ENCODE measurements at regions of chr6 and their contacts with region 1.

Region 1: DNA sequence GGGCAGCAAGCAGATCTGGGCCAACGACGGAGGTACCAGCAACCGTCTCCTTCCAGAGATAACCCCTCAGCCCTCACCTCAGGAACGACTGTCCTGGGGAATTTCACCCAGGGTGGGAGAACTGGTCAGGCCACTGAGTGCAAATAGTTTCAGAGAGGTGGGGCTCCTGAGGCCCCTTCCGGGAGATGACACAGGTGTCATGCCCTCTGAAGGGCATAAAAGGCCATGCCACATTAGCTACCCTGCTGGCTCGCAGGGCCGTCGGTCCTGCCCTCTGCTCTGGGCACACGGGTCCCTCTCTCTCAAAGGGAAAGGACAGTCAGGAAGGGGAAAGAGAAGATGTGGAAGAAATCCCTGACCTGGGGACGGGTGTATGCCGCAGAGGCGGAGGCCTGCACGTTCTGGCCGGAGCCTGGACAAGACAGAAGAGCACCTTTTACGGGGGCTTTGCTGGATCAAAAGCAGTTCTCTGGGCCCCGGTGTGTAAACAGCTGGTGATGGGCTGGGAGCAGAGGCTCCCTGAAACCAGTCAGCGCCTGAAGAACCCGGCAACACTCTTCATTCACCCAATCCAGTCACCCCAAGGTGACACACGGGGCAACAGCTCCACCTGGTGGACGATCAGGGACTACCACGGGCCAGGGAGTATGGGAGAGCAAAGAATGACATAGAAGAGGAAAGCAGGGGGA is 6.4 kb upstream of the TAF8 start:
- DNase-seq: peak; percentile 87
- ATAC-seq: peak; percentile 44
- H3K4me3 Mint-ChIP-seq: peak overlapping the region; percentile 56
- H3K27ac Mint-ChIP-seq: peak overlapping the region; percentile 99
- H3K4me1 Mint-ChIP-seq: peaks cover 86% of the 10 kb centered on the region
- H3K27me3 Mint-ChIP-seq: no peaks in the 10 kb centered on the region
- CTCF ChIP-seq: peak; percentile 69

Region 2: DNA sequence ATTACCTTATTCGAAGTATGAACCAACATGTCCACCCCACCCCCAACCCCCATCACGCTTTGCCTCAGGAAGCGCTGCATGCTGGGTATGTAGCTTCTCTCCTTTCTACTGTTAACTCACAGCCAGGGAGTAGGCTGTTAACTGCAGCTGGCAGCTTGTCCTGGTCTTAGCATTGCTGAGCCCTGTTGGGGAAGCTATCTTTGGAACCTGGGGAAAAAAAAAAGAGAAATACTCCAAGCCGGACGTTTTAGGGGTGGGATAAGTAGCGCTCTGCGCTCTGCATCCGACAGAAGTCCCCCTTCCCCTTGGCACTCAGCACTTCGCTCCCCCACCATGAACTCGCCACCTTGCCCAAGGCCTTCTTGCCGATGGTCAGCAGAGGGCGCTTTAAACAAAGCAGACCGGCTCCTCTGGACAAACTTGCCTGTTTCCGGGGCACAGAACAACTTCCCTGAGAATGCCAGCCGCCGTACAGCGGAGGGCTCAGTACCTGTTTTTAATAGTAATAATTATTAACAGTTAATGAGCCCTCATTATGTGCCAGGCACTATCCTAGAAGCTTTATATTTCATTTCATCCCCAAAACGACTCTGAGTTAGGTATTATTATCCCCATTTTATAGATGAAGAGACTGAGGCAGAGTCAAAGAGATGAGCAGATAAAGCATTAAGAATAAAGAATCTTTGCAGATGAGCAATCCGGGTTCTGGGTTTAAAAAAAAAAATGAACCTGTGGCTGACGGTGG is 440.9 kb before region 1 on chr6:
- CTCF ChIA-PET with region 1: no interaction called
- POLR2A ChIA-PET with region 1: no interaction called
- intact Hi-C with region 1: loop called (anchors 2 kb)
- DNase-seq: peak; percentile 55
- ATAC-seq: peak; percentile 85
- H3K4me3 Mint-ChIP-seq: peak overlapping the region; percentile 46
- H3K27ac Mint-ChIP-seq: no peak overlapping the region
- H3K4me1 Mint-ChIP-seq: peaks cover 10% of the 10 kb centered on the region
- H3K27me3 Mint-ChIP-seq: no peaks in the 10 kb centered on the region
- CTCF ChIP-seq: no peak

Region 3: GRCh38 chr6:41779793-41780545 is 264.0 kb before region 1 on chr6 and contains the start of gene FRS3:
- CTCF ChIA-PET with region 1: interaction called, 51 read pairs
- POLR2A ChIA-PET with region 1: interaction called, 91 read pairs
- intact Hi-C with region 1: loop called (anchors 1 kb)
- DNase-seq: peak; percentile 100
- ATAC-seq: peak; percentile 95
- H3K4me3 Mint-ChIP-seq: peak within 1 kb of the TSS; percentile 93
- H3K27ac Mint-ChIP-seq: peak within 1 kb of the TSS; percentile 63
- H3K4me1 Mint-ChIP-seq: peaks cover 25% of the 10 kb centered on the region
- H3K27me3 Mint-ChIP-seq: no peaks in the 10 kb centered on the region
- CTCF ChIP-seq: no peak
- total RNA-seq, gene FRS3: 6.5 and 6.7 TPM in 2 replicates

Region 4: GRCh38 chr6:41846666-41847237 is 197.2 kb before region 1 on chr6:
- CTCF ChIA-PET with region 1: interaction called, 131 read pairs
- POLR2A ChIA-PET with region 1: interaction called, 4 read pairs
- intact Hi-C with region 1: loop called (anchors 1 kb)
- DNase-seq: no peak
- ATAC-seq: peak; percentile 72
- H3K4me3 Mint-ChIP-seq: no peak overlapping the region
- H3K27ac Mint-ChIP-seq: no peak overlapping the region
- H3K4me1 Mint-ChIP-seq: no peaks in the 10 kb centered on the region
- H3K27me3 Mint-ChIP-seq: no peaks in the 10 kb centered on the region
- CTCF ChIP-seq: no peak

Region 5: DNA sequence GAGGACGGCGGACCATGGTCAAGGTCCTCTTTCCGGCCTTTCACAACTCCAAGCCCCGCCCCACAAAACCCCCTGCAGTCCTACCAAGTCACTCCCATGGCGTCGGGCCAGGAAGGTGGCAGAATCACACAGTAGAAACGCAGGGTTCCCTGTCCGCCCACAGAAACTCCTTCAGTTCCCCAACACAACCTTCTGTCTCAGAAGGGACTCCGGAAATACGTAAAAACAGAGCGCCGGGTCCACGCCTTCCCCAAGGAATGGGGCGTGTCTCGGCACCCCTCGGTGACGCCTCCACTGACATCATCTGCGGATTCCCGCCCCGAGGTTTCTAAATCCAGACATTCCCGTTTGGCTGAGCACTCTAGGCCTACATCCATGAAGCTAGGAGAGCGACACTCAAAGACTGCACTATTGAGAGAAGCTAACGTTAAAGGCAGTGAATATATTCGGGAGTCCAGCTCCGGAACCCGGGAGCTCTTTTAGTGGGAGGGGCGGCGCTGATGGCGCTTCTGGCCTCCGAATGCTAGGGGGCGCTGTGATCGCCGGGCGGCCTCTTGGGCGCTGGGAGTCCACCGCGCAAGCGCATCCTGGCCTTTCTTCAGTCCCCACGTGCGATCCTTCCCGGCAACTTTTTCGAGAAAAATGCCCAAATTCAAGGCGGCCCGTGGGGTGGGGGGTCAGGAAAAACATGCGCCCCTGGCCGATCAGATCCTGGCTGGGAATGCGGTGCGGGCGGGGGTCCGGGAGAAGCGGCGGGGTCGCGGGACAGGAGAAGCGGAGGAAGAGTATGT is 122.8 kb before region 1 on chr6 and contains the starts of genes BYSL and MED20:
- CTCF ChIA-PET with region 1: interaction called, 43 read pairs
- POLR2A ChIA-PET with region 1: interaction called, 30 read pairs
- intact Hi-C with region 1: loop called (anchors 1 kb)
- DNase-seq: peak; percentile 95
- ATAC-seq: peak; percentile 91
- H3K4me3 Mint-ChIP-seq: peak within 1 kb of the TSS; percentile 98
- H3K27ac Mint-ChIP-seq: peak within 1 kb of the TSS; percentile 98
- H3K4me1 Mint-ChIP-seq: peaks cover 49% of the 10 kb centered on the region
- H3K27me3 Mint-ChIP-seq: no peaks in the 10 kb centered on the region
- CTCF ChIP-seq: peak; percentile 24
- total RNA-seq, gene BYSL: 39.5 and 43.2 TPM in 2 replicates
- total RNA-seq, gene MED20: 21.1 and 22.2 TPM in 2 replicates

Region 6: DNA sequence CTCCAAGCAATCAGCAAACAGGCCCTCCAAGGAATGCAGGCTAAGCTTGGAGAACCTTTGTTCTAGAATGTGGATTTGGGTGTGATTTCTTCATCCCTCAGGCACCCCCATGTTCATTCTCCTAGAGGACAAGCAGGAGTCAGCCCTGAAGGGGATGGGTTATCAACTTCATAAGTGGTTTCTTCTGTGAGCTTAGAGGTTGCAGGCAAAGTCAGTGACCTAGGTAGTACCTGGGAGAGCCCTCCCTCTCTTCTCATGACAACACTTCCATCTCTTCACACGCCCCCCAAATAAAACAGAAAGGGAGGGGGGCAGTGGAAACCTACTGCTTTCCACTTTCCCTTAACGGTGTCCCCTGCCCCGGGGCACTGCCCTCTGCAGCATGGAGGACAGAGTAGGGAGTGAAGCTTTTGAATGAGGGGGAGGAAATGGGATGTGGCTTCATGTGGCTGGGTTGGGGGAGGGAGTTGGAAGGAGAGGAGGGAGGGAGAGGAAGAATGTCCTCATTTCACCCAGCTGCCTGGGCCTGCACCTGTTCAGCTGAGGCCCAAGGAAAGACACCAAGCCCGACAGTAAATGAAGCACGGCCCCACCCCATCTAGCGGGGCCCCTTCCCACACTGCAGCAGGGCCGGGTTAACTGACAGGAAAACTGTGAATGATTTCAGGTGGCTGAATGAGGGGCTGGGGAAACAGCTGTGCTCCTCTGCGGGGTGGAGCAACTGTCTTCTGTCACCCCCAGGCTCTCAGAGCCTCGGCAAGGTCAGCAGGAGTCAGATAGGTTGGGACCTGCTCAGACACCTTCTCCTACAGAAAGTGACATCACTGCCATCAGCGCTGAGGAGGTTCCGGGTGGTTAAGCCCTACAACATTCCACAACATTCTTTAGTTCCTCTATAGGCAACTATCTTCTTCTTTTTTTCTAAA is 33.7 kb before region 1 on chr6:
- CTCF ChIA-PET with region 1: interaction called, 5 read pairs
- POLR2A ChIA-PET with region 1: interaction called, 12 read pairs
- intact Hi-C with region 1: loop called (anchors 5 kb)
- DNase-seq: no peak
- ATAC-seq: peak; percentile 38
- H3K4me3 Mint-ChIP-seq: peak overlapping the region; percentile 59
- H3K27ac Mint-ChIP-seq: peak overlapping the region; percentile 87
- H3K4me1 Mint-ChIP-seq: peaks cover 59% of the 10 kb centered on the region
- H3K27me3 Mint-ChIP-seq: no peaks in the 10 kb centered on the region
- CTCF ChIP-seq: no peak

Region 7: GRCh38 chr6:42217519-42218367 is 173.8 kb after region 1 on chr6 and contains the start of gene MRPS10:
- CTCF ChIA-PET with region 1: interaction called, 6 read pairs
- POLR2A ChIA-PET with region 1: interaction called, 3 read pairs
- intact Hi-C with region 1: loop called (anchors 5 kb)
- DNase-seq: peak; percentile 76
- ATAC-seq: peak; percentile 99
- H3K4me3 Mint-ChIP-seq: peak within 1 kb of the TSS; percentile 99
- H3K27ac Mint-ChIP-seq: peak within 1 kb of the TSS; percentile 95
- H3K4me1 Mint-ChIP-seq: peaks cover 30% of the 10 kb centered on the region
- H3K27me3 Mint-ChIP-seq: no peaks in the 10 kb centered on the region
- CTCF ChIP-seq: no peak
- total RNA-seq, gene MRPS10: 35.7 and 37.0 TPM in 2 replicates

Measured in activated B cell treated with CpG ODN at 0.5 μM for 24 hours (primary cell).